HepG2 (cell line): ENCODE measurements at regions of chr6 and their contacts with region 1.

Region 1: GRCh38 chr6:76682842-76683241 is 610.4 kb upstream of the IMPG1 start:
- DNase-seq: peak; percentile 2
- ATAC-seq: no peak
- H3K4me3 ChIP-seq: no peak overlapping the region
- H3K27ac ChIP-seq: no peak overlapping the region
- H3K4me1 ChIP-seq: no peaks in the 10 kb centered on the region
- H3K27me3 ChIP-seq: no peaks in the 10 kb centered on the region; a peak in 1 of 5 replicates
- CTCF ChIP-seq: no peak
- EP300 ChIP-seq: no peak
- POLR2A ChIP-seq: no peak
- RAD21 ChIP-seq: no peak

Region 2: DNA sequence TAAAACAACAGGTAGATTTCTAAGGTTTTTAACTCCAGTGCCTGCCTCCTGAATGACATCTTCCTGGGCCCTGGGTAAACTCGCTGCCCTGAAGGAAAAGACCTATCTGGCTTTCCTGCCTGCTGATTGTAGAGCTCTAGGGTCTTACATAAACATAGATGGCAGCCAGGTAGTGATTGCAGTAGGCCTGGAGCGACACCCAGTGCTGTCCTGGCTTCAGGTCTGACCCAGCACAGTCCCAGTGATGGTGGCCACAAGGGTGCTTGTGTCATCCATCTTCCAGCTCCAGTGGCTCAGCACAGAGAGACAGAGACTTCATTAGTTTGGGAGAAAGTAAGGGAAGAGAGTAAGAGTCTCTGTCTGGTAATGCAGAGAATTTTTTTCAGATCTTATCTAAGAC is 67.4 kb before region 1 on chr6:
- CTCF ChIA-PET with region 1: no interaction called
- POLR2A ChIA-PET with region 1: no interaction called
- in situ Hi-C with region 1: no loop called
- intact Hi-C with region 1: no loop called
- DNase-seq: no peak
- ATAC-seq: no peak
- H3K4me3 ChIP-seq: no peak overlapping the region
- H3K27ac ChIP-seq: no peak overlapping the region
- H3K4me1 ChIP-seq: no peaks in the 10 kb centered on the region
- H3K27me3 ChIP-seq: no peaks in the 10 kb centered on the region
- CTCF ChIP-seq: no peak
- EP300 ChIP-seq: no peak
- POLR2A ChIP-seq: no peak
- RAD21 ChIP-seq: no peak

Region 3: DNA sequence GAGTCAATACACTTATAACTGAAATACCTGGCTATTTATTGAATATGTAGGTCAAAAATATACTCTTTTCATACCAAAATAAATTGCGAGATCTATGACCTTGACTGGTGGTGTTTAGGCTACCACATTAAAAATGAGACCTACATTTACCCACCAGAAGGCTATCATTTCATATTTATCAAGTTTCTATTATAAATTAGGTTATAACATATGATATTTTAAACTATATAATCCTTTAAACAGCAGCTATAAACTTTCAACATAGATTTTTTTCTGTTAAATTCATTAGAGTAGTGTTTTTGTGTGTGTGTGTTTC is 194.4 kb after region 1 on chr6:
- CTCF ChIA-PET with region 1: interaction called, 10 read pairs
- POLR2A ChIA-PET with region 1: no interaction called
- in situ Hi-C with region 1: loop called (anchors 25 kb)
- intact Hi-C with region 1: loop called (anchors 1 kb)
- DNase-seq: no peak
- ATAC-seq: no peak
- H3K4me3 ChIP-seq: no peak overlapping the region
- H3K27ac ChIP-seq: no peak overlapping the region
- H3K4me1 ChIP-seq: no peaks in the 10 kb centered on the region
- H3K27me3 ChIP-seq: no peaks in the 10 kb centered on the region
- CTCF ChIP-seq: no peak
- EP300 ChIP-seq: no peak
- POLR2A ChIP-seq: no peak
- RAD21 ChIP-seq: no peak